Psoas muscle (tissue), 8 donors: ENCODE measurements at regions of chr2 and their contacts with region 1.

Region 1: DNA sequence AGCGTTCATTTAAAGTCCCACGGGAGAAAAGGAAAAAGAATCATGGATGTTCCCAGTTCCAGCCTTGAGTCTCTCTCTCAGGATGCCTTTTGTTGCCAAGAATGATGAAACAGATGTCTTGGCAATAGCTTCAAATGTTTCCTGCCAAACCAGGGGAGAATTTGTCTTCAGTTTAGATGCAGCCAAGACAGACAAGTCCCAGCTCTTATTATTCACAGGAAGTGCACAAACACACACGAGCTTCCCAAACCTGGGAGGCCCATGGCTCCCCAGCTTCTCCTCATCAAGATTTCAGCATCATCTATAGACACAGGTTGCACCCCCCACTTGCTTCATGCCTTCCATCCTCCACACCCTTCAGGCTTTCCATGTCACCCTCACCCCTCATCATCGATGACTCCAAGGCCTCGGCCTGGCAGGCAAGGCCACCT is 45.9 kb downstream of the HS1BP3 start:
- DNase-seq: peak in 1 of 2 donors; percentile 54
- ATAC-seq: peak; percentile 60 to 84 (median 68)
- H3K4me3 ChIP-seq: no peak overlapping the region
- H3K27ac ChIP-seq: peak overlapping the region; percentile 18
- H3K4me1 ChIP-seq: peaks cover 21% of the 10 kb centered on the region
- H3K27me3 ChIP-seq: no peaks in the 10 kb centered on the region
- CTCF ChIP-seq: no peak

Region 2: GRCh38 chr2:20585710-20586594 is 19.0 kb before region 1 on chr2:
- intact Hi-C with region 1: loop called in 1 of 2 experiments (anchors 2 kb)
- DNase-seq: peak in 1 of 2 donors; percentile 44
- ATAC-seq: no peak
- H3K4me3 ChIP-seq: no peak overlapping the region
- H3K27ac ChIP-seq: no peak overlapping the region
- H3K4me1 ChIP-seq: peaks cover 24% of the 10 kb centered on the region
- H3K27me3 ChIP-seq: no peaks in the 10 kb centered on the region
- CTCF ChIP-seq: no peak

Region 3: DNA sequence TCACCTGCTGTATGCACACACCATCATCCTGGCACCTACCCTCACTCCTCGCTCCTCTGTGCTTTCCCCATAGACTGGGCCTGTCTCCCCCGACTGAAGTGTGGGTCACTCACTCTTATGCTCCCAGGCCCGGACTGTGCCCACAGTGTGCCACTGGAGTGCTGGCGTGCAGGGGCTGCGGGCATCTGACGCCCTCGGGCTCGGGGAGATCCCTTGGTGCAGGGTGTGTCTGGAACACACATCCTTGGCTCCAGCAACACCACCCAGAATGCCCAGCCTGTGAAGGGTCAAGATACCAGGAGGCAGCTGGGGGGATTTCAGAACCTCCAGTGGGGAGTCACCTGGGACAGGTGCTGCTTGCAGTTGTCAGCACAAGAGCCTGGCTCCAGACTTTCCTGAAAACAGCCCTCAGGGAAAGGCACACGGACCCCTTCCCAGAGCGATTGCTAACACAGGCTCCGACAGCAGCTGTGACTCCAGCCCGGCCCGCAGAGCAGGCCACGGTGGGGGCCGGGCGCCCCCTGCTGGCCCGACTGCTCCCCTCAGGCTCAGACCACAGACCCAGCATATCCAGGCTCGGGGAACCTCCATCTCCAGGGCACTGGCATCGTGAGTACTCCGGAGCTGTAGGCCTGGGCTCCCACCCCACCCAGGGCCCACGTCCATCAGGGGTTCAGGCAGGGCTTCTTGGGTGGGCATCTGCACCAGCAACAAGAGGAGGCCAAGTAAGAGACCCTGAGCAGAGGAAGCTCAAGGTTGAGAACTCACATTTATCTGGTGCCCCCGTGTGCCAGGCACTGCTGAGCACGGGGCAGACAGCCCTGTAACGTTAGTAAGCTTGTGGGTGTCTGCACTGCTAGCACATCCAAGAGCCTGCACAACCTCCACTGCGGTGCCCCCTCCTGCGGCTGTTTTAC is 37.3 kb after region 1 on chr2:
- intact Hi-C with region 1: no loop called
- DNase-seq: peak; percentile 83 to 89
- ATAC-seq: peak; percentile 92 to 98 (median 94)
- H3K4me3 ChIP-seq: no peak overlapping the region
- H3K27ac ChIP-seq: peak overlapping the region; percentile 46
- H3K4me1 ChIP-seq: peaks cover 3% of the 10 kb centered on the region
- H3K27me3 ChIP-seq: no peaks in the 10 kb centered on the region
- CTCF ChIP-seq: peak; percentile 95